ENCODE measurements at regions of chr5 and their contacts with region 1.

Region 1: DNA sequence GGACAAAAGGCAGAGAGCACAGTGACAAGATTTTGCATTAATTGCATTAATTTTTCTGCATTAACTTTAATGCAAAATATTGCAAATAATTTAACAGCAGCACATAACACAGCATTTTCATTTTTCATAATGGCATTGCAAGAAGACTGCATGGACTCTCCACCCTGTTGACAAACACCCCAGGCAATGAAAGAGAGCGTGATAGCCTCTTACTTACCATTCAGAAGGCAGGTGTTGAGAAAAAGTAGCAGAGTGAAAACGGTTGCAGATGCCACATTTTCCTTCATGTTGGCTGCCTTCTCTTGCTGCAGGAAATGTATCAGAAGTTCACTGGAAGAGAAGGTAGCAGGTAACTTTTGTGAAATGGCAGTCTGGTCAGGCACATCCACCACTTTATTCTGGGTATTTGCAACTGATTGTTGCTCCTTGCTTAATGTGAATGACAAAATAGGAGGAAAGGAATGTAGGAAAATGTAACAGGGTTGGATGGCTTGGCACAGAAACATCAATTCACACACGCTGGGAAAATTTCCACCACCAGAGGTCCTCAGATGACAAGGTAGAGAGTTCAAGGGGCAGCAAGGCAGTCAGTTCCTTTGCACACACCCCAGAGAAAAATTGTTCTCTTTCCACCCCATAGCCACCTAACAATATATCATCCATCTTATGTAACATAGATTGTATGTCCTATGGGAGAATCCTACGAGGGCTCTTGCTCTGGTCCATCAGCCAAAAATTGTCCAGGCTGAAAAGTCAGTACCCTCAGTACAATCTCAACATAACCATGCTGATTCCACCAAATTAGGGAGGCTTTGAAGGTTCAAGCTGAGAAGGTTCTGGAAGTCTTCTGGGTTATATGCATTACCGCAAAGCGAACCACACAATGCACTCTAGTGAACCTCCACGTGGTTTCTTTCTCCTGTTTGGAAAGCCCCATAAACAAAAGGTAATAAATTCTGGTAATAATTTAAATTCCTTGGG is 41.9 kb upstream of the AGXT2 start:
- DNase-seq: peak in 8 of 10 donors; percentile 27 to 69 (median 45)
- H3K4me3 ChIP-seq: no peak overlapping the region
- H3K27ac ChIP-seq: no peak overlapping the region
- H3K27me3 ChIP-seq: no peaks in the 10 kb centered on the region
- CTCF ChIP-seq: peak; percentile 50 to 83 (median 71)

Region 2: GRCh38 chr5:35182541-35183535 is 93.2 kb after region 1 on chr5:
- intact Hi-C with region 1: loop called (anchors 5 to 10 kb)
- DNase-seq: peak in 2 of 10 donors; percentile 47 to 71
- H3K4me3 ChIP-seq: no peak overlapping the region
- H3K27ac ChIP-seq: no peak overlapping the region
- H3K27me3 ChIP-seq: peaks cover 0 to 10% (median 0%) of the 10 kb centered on the region in 45 donors
- CTCF ChIP-seq: peak in 50 of 56 donors; percentile 17 to 64 (median 44)

Measured in dorsolateral prefrontal cortex (tissue), 120 donors.